A673 (cell line): ENCODE measurements at regions of chr7 and their contacts with region 1.

Region 1: DNA sequence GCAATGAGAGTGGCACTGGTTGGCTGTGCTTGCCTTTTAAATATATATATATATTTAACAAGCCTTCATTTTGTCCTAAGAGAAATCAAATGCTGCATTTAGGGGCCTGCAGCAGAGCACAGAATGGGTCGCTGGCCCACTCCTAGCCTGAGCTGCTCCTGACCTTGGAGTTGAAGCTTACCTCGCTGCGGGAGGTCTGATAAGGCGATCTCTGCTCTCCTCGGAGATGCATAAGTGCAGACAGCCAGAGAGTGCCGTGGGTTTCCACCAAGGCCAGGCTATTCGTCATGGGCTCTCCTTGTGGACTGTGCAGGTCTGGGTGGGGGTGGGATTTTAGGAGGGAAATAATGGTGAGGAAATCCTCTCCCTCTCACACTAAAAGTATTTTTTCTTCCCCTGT is 99.5 kb upstream of the IKZF1 start:
- DNase-seq: no peak
- H3K4me3 ChIP-seq: no peak overlapping the region
- H3K27ac ChIP-seq: no peak overlapping the region
- H3K4me1 ChIP-seq: no peaks in the 10 kb centered on the region
- H3K27me3 ChIP-seq: no peaks in the 10 kb centered on the region
- CTCF ChIP-seq: no peak

Region 2: DNA sequence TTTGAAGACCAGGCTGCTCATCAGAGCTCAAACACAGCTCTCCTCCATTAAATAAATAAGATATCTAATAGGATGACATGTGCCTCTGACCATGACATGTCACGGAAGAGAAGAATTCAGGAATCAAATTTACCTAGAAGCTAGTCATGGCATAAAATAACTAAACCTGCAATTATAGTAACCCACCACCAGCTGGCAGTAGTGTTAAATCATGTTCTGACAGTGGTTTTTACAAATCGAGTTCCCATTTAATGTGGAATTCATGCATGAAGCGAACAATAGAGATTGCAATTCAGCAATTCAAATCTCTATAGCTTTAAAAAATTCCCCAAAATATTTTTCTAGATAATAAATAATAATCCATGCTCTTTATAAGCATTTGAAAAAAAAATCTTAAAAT is 25.0 kb after region 1 on chr7:
- CTCF ChIA-PET with region 1: interaction called, 13 read pairs
- POLR2A ChIA-PET with region 1: no interaction called
- intact Hi-C with region 1: no loop called
- DNase-seq: peak; percentile 18
- H3K4me3 ChIP-seq: no peak overlapping the region
- H3K27ac ChIP-seq: no peak overlapping the region
- H3K4me1 ChIP-seq: peaks cover 6% of the 10 kb centered on the region
- H3K27me3 ChIP-seq: no peaks in the 10 kb centered on the region
- CTCF ChIP-seq: peak; percentile 51; the same call in 1 of the 2 replicates

Region 3: DNA sequence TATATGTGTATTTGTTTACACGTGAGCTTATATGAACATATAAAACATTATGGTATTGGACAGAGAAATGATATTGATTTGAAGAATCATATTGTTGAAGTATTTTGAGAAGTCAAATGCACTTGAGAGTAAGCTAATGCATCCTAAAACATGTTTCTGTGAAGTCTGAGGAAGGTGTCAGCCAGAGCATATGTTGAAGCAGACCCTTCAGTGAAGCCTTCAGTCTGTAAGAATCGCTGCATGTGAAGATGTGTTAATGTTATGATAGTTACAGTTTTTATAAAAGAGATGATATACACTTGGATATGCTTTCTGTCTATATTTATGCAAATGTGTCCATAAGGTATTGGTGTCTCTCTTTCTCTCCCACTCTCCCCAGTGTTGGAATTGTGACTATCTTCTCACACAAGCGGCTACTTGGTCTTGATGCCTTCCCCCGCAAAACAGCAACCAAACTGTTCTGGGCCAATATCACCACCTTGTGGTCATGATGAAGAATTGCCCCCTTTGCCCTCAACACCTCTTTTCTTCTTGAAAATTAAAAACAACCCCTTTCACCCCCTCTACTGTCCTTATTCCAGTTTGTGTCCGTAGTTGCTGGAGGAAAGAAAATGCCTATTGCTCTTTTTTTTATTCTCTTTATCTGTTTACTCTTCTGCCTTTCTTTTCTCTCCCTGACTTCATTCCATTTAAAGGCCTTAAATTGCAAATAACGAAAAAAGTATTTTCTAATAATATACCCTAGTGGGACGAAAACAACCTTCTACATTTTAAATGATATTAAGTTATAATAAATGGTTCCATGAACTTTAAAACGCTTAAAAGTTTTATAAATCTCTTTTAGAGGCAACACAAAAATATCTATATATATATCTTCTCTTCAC is 164.4 kb after region 1 on chr7:
- CTCF ChIA-PET with region 1: no interaction called
- POLR2A ChIA-PET with region 1: no interaction called
- intact Hi-C with region 1: loop called (anchors 1 kb)
- DNase-seq: peak; percentile 79
- H3K4me3 ChIP-seq: no peak overlapping the region
- H3K27ac ChIP-seq: no peak overlapping the region
- H3K4me1 ChIP-seq: no peaks in the 10 kb centered on the region
- H3K27me3 ChIP-seq: no peaks in the 10 kb centered on the region
- CTCF ChIP-seq: peak; percentile 71

Region 4: GRCh38 chr7:50418086-50418515 is 213.1 kb after region 1 on chr7:
- CTCF ChIA-PET with region 1: interaction called, 7 read pairs
- POLR2A ChIA-PET with region 1: no interaction called
- intact Hi-C with region 1: loop called (anchors 1 kb)
- DNase-seq: peak; percentile 86
- H3K4me3 ChIP-seq: no peak overlapping the region
- H3K27ac ChIP-seq: no peak overlapping the region
- H3K4me1 ChIP-seq: no peaks in the 10 kb centered on the region
- H3K27me3 ChIP-seq: no peaks in the 10 kb centered on the region
- CTCF ChIP-seq: peak; percentile 89

Region 5: DNA sequence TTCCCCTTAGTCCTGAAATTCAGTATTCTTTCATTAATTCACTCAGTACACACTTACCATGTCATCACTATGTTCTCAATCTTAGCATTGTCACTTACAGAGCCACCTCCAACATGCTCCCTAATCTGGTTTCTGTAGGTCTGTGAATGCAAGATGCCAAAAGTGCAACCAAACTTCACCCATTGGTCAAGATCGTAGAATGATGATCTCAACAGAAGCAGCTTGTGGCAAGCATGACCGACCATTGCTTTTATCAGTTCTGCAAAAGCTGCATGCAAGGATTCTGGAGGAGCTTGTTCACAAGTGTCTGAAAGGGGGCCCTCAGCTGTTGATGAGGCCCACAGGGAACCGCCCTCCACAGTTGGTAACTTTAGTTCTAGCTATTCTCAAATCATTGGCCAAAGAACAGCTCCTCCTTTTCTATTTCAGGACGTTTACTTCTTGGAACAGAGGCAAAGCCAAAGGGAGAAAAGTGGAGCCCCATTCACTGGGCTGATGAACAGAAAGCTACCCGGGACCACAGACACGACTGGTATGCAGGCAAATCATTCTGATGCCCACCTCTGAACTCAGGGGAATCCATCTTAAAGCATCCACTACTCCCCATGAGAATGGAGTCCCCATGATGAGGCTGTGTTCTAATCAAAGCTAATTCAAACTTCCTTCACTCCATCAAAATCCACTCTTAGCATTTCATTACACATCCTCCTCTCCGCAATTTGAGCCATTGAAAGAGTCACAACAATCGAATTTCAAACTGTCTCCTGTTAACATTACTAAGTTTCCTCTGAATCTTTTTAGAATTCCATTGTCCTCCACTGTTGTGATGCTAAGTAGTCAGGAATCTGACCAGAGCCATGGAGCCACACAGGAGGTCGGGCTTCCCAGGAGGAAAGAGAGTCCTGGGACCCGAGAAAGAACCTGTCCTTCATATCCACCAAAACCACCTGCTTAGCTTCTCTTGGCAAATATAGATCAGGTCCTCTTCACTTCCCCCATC is 563.8 kb after region 1 on chr7:
- CTCF ChIA-PET with region 1: no interaction called
- POLR2A ChIA-PET with region 1: no interaction called
- intact Hi-C with region 1: no loop called
- DNase-seq: no peak
- H3K4me3 ChIP-seq: no peak overlapping the region
- H3K27ac ChIP-seq: no peak overlapping the region
- H3K4me1 ChIP-seq: no peaks in the 10 kb centered on the region
- H3K27me3 ChIP-seq: no peaks in the 10 kb centered on the region
- CTCF ChIP-seq: no peak